Motor neuron (in vitro differentiated cells): ENCODE measurements at regions of chr21 and their contacts with region 1.

Region 1: DNA sequence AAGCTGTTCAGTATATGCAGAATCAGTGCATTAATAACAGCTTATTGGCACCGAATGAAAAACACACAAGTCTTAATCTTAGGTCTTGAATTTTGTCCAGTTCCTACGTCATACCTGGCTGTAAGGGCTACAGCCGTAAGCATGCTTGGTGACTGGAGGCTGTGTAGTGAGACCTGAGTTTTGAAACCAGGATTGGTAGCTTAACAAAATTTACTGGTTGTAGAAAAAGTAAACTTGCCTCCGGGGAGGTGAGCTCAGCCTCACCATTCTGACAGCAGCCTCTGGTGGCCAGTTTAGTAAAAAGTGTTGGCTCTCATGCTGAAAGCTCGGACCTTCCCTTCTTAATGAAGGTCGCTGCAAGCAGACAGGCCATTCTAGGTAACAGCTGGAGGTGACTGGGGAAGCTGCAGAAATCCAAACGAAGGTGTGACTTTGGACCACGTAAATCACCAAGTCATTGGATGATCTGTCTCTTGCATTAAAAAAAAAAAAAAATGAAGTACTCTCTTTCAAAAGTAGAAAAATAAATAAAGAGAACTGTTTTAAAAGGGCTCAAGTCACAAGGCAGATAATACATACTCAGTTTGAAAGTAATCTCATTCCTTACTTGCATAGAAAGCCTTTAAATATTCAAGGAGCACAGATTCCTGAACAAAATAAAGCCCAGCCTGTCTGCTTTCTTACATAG is 48.9 kb downstream of the HLCS start:
- ATAC-seq: peak in 4 of 8 experiments; percentile 34 to 67 (median 53)
- H3K4me3 ChIP-seq: no peak overlapping the region
- H3K27ac ChIP-seq: no peak overlapping the region
- H3K4me1 ChIP-seq: peaks cover 4 to 8% of the 10 kb centered on the region in 2 donors

Region 2: GRCh38 chr21:36478207-36478701 is 439.4 kb before region 1 on chr21:
- in situ Hi-C with region 1: loop called in 1 of 9 experiments (anchors 25 kb)
- ATAC-seq: peak in 2 of 8 experiments; percentile 79 to 86
- H3K4me3 ChIP-seq: no peak overlapping the region
- H3K27ac ChIP-seq: no peak overlapping the region
- H3K4me1 ChIP-seq: no peaks in the 10 kb centered on the region

Region 3: GRCh38 chr21:36504067-36505058 is 413.3 kb before region 1 on chr21:
- in situ Hi-C with region 1: loop called in 2 of 9 experiments (anchors 25 kb)
- ATAC-seq: no peak
- H3K4me3 ChIP-seq: no peak overlapping the region
- H3K27ac ChIP-seq: no peak overlapping the region
- H3K4me1 ChIP-seq: no peaks in the 10 kb centered on the region

Region 4: GRCh38 chr21:36661511-36662309 is 255.9 kb before region 1 on chr21:
- in situ Hi-C with region 1: loop called in 1 of 9 experiments (anchors 25 kb)
- ATAC-seq: peak in 3 of 8 experiments; percentile 17 to 62 (median 25)
- H3K4me3 ChIP-seq: no peak overlapping the region
- H3K27ac ChIP-seq: no peak overlapping the region
- H3K4me1 ChIP-seq: peaks cover 3 to 6% of the 10 kb centered on the region in 2 donors

Region 5: GRCh38 chr21:36820176-36821031 is 97.2 kb before region 1 on chr21:
- in situ Hi-C with region 1: loop called in 1 of 9 experiments (anchors 25 kb)
- ATAC-seq: no peak
- H3K4me3 ChIP-seq: no peak overlapping the region
- H3K27ac ChIP-seq: no peak overlapping the region
- H3K4me1 ChIP-seq: peaks cover 10 to 18% of the 10 kb centered on the region in 2 donors